BJ (cell line): ENCODE measurements at regions of chr2 and their contacts with region 1.

Region 1: DNA sequence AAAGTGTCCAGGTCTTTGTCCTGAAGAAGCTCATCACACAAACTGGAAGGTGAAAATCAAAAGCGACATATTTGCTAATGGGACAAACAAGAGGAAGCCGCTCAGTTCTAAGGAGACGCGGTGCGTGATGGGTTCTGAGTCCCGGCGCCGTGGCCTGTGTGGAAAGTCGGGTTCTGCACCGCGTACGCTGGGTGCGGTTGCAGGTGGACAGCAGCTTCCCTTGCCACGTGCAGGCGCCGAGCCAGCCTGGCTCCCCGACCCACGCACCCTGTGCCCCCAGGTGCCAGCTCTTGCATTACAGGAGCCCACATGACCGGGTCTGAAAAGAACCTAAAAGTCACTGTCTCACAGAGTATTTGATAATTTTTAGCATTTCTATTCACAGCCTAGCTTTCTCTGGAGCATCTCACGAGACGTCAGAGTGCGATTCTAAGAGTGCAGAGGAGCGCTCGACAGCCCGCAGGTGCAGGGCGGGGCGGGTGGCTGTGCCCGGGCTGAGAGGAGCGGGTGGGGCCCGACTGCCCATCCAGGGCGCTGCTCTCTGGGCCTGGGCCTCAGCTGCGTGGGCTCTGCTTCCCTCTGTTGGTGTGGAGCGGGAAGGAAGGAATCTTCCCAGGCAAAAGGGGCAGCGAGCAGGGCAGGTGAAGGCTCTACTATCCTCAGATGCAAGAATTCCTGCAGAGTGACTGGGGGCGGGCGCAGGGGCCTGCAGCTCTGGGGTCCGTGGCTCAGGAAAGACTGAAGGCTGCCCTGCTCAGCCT is 39.4 kb downstream of the MYT1L start:
- DNase-seq: no peak
- H3K4me3 ChIP-seq: no peak overlapping the region
- H3K27me3 ChIP-seq: no peaks in the 10 kb centered on the region
- CTCF ChIP-seq: peak; percentile 63

Region 2: DNA sequence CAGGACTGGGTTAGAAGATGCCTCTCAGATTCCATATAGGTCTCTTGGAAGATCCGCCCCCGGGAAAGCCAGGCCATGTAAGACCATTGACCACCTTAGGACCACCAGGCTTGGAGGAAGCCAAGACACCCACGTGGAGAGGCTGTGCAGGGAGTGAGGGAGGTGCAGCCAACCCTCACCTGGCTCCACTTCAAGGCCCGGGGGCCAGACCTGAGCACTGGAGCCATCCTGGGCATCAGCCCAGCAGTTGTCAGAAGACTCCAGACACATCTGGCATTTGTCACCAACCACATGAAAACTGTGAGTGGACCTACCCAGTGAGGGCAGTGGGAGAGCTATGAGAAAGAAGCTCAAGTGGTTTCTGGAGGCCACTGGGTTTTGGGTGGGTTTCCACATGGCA is 175.0 kb before region 1 on chr2:
- CTCF ChIA-PET with region 1: interaction called, 10 read pairs
- POLR2A ChIA-PET with region 1: no interaction called
- DNase-seq: no peak
- H3K4me3 ChIP-seq: no peak overlapping the region
- H3K27me3 ChIP-seq: no peaks in the 10 kb centered on the region
- CTCF ChIP-seq: no peak

Region 3: DNA sequence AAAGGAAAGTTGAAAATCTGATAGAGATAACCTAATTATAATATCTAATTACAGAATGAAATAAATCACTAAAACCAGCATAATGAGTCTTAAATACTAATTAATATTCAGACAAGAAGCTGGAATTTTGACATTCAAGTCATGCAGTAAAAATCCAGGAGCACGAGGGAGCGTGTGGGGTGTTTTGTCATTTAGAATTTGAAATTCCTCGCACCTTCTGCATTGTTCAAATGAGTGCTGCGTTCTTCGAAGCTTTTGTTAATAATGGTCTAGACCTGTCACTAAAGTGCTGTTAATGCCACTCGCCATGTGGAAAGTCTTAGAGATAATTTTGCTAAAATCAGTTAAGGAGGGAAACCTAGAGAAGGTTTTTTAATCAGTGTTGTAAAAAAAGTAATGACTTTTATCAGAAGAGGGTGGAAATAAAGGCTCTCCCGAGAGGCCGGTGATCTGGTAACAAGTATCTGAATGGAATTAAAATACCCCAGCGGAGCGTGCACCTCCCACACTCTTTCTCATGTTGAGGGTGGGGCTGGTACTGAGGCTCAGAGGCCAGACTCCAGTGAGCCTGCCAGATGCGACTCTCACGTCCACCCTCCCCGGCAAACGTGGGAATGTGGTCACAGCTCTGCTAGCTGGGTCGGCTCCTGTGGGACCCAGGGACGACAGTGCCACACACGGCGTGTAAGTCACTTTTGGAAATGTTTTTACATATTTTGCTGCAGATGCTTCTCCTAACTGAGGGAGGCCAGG is 108.8 kb after region 1 on chr2:
- CTCF ChIA-PET with region 1: no interaction called
- POLR2A ChIA-PET with region 1: no interaction called
- DNase-seq: no peak
- H3K4me3 ChIP-seq: no peak overlapping the region
- H3K27me3 ChIP-seq: no peaks in the 10 kb centered on the region
- CTCF ChIP-seq: no peak